MCF 10A (cell line): ENCODE measurements at regions of chr7 and their contacts with region 1.

Region 1: GRCh38 chr7:90595801-90596671 is at the start of gene CDK14:
- DNase-seq: peak; percentile 75
- H3K4me3 Mint-ChIP-seq: peak within 1 kb of the TSS; percentile 94
- H3K27ac Mint-ChIP-seq: peak within 1 kb of the TSS; percentile 73
- H3K4me1 Mint-ChIP-seq: peaks cover 57% of the 10 kb centered on the region
- H3K27me3 Mint-ChIP-seq: no peaks in the 10 kb centered on the region
- CTCF ChIP-seq: peak; percentile 50
- total RNA-seq, gene CDK14: 21.2 and 32.0 TPM in 2 replicates

Region 2: GRCh38 chr7:90552521-90552920 is 43.5 kb before region 1 on chr7:
- CTCF ChIA-PET with region 1: interaction called, 17 read pairs
- POLR2A ChIA-PET with region 1: interaction called, 6 read pairs
- intact Hi-C with region 1: loop called (anchors 2 kb)
- DNase-seq: peak; percentile 34
- H3K4me3 Mint-ChIP-seq: no peak overlapping the region
- H3K27ac Mint-ChIP-seq: no peak overlapping the region
- H3K4me1 Mint-ChIP-seq: no peaks in the 10 kb centered on the region
- H3K27me3 Mint-ChIP-seq: no peaks in the 10 kb centered on the region
- CTCF ChIP-seq: peak; percentile 30

Region 3: GRCh38 chr7:90579171-90579688 is 16.8 kb before region 1 on chr7:
- CTCF ChIA-PET with region 1: interaction called, 13 read pairs
- POLR2A ChIA-PET with region 1: interaction called, 25 read pairs
- intact Hi-C with region 1: loop called (anchors 1 kb)
- DNase-seq: peak; percentile 78
- H3K4me3 Mint-ChIP-seq: no peak overlapping the region
- H3K27ac Mint-ChIP-seq: peak overlapping the region; percentile 14
- H3K4me1 Mint-ChIP-seq: peaks cover 9% of the 10 kb centered on the region
- H3K27me3 Mint-ChIP-seq: no peaks in the 10 kb centered on the region
- CTCF ChIP-seq: no peak

Region 4: GRCh38 chr7:90613088-90613498 is 17.1 kb after region 1 on chr7:
- CTCF ChIA-PET with region 1: interaction called, 41 read pairs
- POLR2A ChIA-PET with region 1: interaction called, 136 read pairs
- intact Hi-C with region 1: no loop called
- DNase-seq: no peak
- H3K4me3 Mint-ChIP-seq: no peak overlapping the region
- H3K27ac Mint-ChIP-seq: no peak overlapping the region
- H3K4me1 Mint-ChIP-seq: peaks cover 7% of the 10 kb centered on the region
- H3K27me3 Mint-ChIP-seq: no peaks in the 10 kb centered on the region
- CTCF ChIP-seq: no peak

Region 5: GRCh38 chr7:90660100-90660499 is 64.1 kb after region 1 on chr7:
- CTCF ChIA-PET with region 1: no interaction called
- POLR2A ChIA-PET with region 1: no interaction called
- intact Hi-C with region 1: no loop called
- DNase-seq: no peak
- H3K4me3 Mint-ChIP-seq: no peak overlapping the region
- H3K27ac Mint-ChIP-seq: no peak overlapping the region
- H3K4me1 Mint-ChIP-seq: peaks cover 7% of the 10 kb centered on the region
- H3K27me3 Mint-ChIP-seq: no peaks in the 10 kb centered on the region
- CTCF ChIP-seq: no peak

Region 6: DNA sequence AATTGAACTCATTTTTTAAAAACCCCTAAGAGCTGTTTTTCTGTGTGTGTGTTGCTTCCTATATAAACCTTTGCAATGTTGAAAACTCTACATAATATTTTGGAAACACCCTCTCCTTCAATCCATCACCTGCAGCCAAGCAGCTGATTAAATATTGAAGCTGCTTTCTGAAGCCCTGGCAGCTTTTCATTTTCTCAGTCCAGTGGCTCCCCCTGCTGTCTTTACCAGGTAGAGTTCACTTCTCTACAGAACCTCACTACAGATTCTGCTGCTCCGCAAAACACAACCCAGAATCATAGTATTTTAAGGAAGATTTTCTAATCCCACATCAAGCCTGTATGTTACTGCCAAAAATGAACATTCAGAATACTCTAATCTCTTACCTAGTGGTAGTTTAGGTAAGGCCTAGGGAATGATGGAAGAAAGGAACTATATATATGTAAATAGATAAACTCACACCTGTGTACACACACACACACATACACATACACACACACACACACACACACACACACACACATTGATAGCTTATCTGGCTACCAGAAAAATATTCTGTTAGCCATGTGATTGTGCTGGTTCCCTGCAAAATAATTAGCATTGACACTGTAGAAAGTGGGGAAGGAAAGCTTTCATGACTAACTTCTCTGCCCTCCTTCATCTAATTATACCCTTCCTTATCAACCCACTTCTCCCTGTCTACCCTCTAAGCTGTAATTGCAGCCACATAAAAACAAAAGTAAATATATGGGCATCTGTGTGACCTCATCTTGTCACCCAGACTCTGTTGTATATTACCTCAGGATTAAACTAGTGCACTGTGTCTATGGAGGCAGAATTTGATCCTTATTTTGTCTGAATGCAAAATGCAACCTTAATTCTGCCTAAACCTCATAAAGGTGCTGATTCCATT is 438.7 kb after region 1 on chr7:
- CTCF ChIA-PET with region 1: interaction called, 3 read pairs
- POLR2A ChIA-PET with region 1: no interaction called
- intact Hi-C with region 1: loop called (anchors 1 kb)
- DNase-seq: peak; percentile 57
- H3K4me3 Mint-ChIP-seq: no peak overlapping the region
- H3K27ac Mint-ChIP-seq: no peak overlapping the region
- H3K4me1 Mint-ChIP-seq: no peaks in the 10 kb centered on the region
- H3K27me3 Mint-ChIP-seq: no peaks in the 10 kb centered on the region
- CTCF ChIP-seq: peak; percentile 72

Region 7: GRCh38 chr7:91824201-91824600 is 1228.2 kb after region 1 on chr7:
- CTCF ChIA-PET with region 1: no interaction called
- POLR2A ChIA-PET with region 1: no interaction called
- intact Hi-C with region 1: no loop called
- DNase-seq: no peak
- H3K4me3 Mint-ChIP-seq: no peak overlapping the region
- H3K27ac Mint-ChIP-seq: no peak overlapping the region
- H3K4me1 Mint-ChIP-seq: peaks cover 7% of the 10 kb centered on the region
- H3K27me3 Mint-ChIP-seq: no peaks in the 10 kb centered on the region
- CTCF ChIP-seq: no peak